ENCODE measurements at regions of chr11 and their contacts with region 1.

Region 1: DNA sequence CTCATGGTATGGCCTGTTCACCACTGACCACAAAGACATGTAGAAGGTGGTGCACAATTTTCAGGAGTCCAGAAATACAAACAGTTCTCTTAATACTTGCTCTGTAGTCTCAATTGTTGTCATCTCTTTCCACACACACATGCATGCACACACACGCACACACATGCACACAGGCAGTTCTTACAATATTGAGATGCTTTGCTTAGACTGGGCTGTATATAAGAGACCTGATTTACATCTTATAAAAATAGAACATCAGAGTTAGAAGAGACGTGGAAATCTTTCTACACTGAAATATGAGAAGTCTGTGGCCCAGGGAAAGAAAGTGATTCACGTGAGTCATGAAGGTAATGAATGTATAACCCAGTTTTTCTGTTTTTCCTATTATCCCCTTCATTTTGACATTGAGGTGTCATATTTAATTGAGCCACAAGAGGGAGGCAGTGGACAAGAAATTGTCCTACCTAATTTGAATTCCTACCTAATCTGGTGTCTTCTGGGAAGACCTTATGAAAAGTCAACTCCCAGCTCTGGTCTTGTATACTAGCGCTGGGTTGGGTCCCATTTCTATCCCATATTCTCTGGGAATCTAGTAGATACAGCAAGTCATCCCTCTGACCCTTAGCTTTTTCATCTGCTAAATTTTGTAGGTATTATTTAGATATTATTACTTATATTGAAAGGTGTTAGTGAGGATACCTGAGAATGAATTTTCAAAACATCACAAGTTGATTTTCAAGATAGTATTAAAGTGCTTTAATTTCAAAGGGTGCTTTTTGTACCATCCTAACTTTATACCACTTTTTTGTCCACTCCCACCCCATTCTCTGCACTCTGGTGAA is 14.9 kb upstream of the MS4A4A start:
- DNase-seq: peak; percentile 44 to 64 (median 58)
- H3K4me3 ChIP-seq: no peak overlapping the region
- H3K27ac ChIP-seq: no peak overlapping the region
- H3K4me1 ChIP-seq: no peaks in the 10 kb centered on the region
- H3K27me3 ChIP-seq: no peaks in the 10 kb centered on the region

Region 2: GRCh38 chr11:60169264-60169915 is 96.2 kb before region 1 on chr11:
- CTCF ChIA-PET with region 1: no interaction called
- POLR2A ChIA-PET with region 1: no interaction called
- DNase-seq: peak; percentile 69 to 91 (median 88)
- H3K4me3 ChIP-seq: no peak overlapping the region
- H3K27ac ChIP-seq: no peak overlapping the region
- H3K4me1 ChIP-seq: peaks cover 0 to 4% (median 0%) of the 10 kb centered on the region in 4 experiments
- H3K27me3 ChIP-seq: peaks cover 0 to 23% (median 4%) of the 10 kb centered on the region in 5 experiments

Region 3: DNA sequence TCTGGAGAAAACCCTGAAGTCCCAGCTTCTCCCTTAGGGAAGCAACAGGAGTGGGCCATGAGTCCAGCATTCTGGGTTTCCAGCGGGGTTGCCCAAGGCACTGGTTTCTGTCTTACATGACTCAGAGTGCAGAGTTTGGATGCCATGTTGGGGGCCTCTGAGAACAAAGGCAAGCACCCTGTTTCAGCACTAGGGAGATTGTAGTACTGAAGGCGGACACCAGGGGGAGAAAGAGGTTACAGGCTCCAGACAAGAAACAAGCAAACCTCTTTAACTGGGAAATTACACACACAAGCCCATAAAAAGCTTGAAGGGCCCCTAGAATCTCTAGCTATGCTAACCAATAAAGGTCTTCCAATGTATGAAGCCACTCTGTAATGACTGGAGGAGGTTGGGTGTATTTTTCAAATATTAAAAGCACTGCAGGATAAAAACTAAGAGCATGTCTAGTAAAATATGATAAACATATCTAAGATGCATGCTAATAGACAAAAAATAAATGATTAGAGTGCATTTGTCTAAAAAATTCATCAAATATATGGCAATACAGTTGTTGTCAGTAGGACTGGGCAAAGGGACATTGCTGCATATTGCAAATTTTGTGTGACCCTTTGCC is 68.5 kb after region 1 on chr11:
- CTCF ChIA-PET with region 1: interaction called, 28 read pairs
- POLR2A ChIA-PET with region 1: no interaction called
- DNase-seq: peak; percentile 85 to 91 (median 86)
- H3K4me3 ChIP-seq: no peak overlapping the region
- H3K27ac ChIP-seq: no peak overlapping the region
- H3K4me1 ChIP-seq: peaks cover 4 to 17% (median 7%) of the 10 kb centered on the region in 4 experiments
- H3K27me3 ChIP-seq: no peaks in the 10 kb centered on the region

Region 4: DNA sequence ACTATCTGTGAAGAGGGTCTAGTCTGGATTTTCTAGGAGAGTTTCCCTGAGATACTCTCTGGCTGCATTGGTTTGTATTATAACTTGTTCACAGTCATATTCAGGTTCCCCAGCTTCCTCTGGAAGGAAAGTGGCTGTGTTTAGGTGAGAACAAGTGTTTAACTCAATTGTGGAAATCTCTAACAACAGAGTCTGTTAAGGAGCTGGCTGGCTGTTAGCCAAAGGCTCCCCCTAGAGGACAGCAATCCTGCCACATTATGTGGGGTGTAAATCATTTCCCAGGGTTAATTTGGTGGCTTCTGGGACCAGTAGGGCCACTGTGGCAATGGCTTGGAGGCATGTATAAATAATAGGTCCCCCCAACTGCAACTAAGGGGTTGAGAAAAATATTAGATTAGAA is 79.9 kb after region 1 on chr11:
- CTCF ChIA-PET with region 1: interaction called, 66 read pairs
- POLR2A ChIA-PET with region 1: no interaction called
- DNase-seq: peak; percentile 54 to 77 (median 66)
- H3K4me3 ChIP-seq: no peak overlapping the region
- H3K27ac ChIP-seq: no peak overlapping the region
- H3K4me1 ChIP-seq: peaks cover 0 to 4% (median 0%) of the 10 kb centered on the region in 4 experiments
- H3K27me3 ChIP-seq: no peaks in the 10 kb centered on the region

Region 5: DNA sequence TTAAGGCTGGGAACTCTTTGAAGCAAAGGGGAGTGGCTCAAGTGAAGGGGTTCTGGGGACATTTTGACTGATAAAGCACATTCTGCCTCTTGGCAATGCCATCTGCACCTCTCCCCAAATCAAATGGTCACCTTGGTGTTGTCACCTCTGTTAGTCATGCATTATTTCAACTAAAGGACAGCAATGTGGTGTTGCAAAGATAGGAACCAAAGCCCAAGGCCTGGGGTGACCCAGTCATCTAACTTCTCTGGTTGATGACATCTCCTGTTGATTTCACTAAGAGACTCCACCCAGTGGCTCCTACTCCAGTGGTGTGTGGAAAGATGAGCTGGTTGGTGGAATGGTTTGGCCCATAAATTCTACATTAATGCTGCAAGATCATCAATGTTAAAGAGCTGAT is 182.3 kb after region 1 on chr11:
- CTCF ChIA-PET with region 1: no interaction called
- POLR2A ChIA-PET with region 1: no interaction called
- DNase-seq: peak in 1 of 3 donors; percentile 3
- H3K4me3 ChIP-seq: no peak overlapping the region
- H3K27ac ChIP-seq: no peak overlapping the region
- H3K4me1 ChIP-seq: peaks cover 0 to 17% (median 7%) of the 10 kb centered on the region in 4 experiments
- H3K27me3 ChIP-seq: no peaks in the 10 kb centered on the region

Region 6: DNA sequence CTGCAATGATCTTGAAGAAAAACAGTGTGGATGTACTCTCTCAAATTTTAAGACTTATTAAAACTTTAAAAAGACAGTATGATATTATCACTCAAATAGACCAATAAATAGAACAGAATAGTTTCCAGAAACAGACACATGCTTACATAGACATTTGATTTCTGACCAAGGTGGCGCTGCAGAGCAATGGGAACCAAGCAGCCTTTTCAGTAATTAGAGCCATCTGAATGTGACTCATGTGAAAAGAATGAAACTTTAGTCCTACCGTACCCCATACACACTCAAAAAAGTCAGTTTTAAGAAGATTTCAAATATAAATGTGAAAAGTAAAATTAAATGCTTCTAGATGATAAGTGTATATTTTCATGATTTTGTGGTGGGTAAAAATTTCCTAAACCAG is 359.7 kb after region 1 on chr11:
- CTCF ChIA-PET with region 1: interaction called, 21 read pairs
- POLR2A ChIA-PET with region 1: no interaction called
- DNase-seq: peak in 1 of 3 donors; percentile 15
- H3K4me3 ChIP-seq: no peak overlapping the region
- H3K27ac ChIP-seq: no peak overlapping the region
- H3K4me1 ChIP-seq: no peaks in the 10 kb centered on the region
- H3K27me3 ChIP-seq: no peaks in the 10 kb centered on the region